Dendritic cell treated with granulocyte-macrophage colony-stimulating factor and Interleukin-4, amounts not matched to agents 40 ng/mL and 50 ng/mL, for 4 days (primary cell): ENCODE measurements at regions of chr12 and their contacts with region 1.

Region 1: GRCh38 chr12:119444456-119445044 is 110.0 kb downstream of the CCDC60 start:
- H3K4me3 Mint-ChIP-seq: no peak overlapping the region
- H3K27ac Mint-ChIP-seq: no peak overlapping the region
- H3K4me1 Mint-ChIP-seq: no peaks in the 10 kb centered on the region
- H3K27me3 Mint-ChIP-seq: peaks cover 3% of the 10 kb centered on the region

Region 2: DNA sequence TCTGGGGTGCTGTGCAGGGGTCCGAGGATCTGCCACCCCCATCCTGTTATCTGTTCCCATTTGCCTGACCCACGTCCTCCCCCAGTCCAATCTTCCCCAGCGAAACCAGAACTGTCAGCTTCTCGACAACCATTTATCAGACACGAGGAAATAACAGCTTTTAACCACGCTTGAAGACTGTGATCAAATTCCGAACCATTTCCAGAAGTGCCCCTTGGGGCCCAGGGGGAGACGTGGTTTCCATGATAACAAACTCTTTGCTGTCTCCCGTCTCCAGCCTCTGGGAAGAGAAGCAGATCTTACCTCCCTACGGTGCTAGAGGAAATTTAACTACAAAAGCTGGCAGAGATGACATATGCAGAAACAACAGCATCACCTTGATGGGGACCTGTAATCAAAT is 498.3 kb before region 1 on chr12:
- intact Hi-C with region 1: no loop called
- H3K4me3 Mint-ChIP-seq: no peak overlapping the region
- H3K27ac Mint-ChIP-seq: no peak overlapping the region
- H3K4me1 Mint-ChIP-seq: no peaks in the 10 kb centered on the region
- H3K27me3 Mint-ChIP-seq: no peaks in the 10 kb centered on the region

Region 3: GRCh38 chr12:119649202-119649808 is 204.8 kb after region 1 on chr12:
- intact Hi-C with region 1: loop called (anchors 5 kb)
- H3K4me3 Mint-ChIP-seq: no peak overlapping the region
- H3K27ac Mint-ChIP-seq: no peak overlapping the region
- H3K4me1 Mint-ChIP-seq: peaks cover 8% of the 10 kb centered on the region
- H3K27me3 Mint-ChIP-seq: peaks cover 5% of the 10 kb centered on the region